Dorsolateral prefrontal cortex (tissue), 120 donors: ENCODE measurements at regions of chr9 and their contacts with region 1.

Region 1: DNA sequence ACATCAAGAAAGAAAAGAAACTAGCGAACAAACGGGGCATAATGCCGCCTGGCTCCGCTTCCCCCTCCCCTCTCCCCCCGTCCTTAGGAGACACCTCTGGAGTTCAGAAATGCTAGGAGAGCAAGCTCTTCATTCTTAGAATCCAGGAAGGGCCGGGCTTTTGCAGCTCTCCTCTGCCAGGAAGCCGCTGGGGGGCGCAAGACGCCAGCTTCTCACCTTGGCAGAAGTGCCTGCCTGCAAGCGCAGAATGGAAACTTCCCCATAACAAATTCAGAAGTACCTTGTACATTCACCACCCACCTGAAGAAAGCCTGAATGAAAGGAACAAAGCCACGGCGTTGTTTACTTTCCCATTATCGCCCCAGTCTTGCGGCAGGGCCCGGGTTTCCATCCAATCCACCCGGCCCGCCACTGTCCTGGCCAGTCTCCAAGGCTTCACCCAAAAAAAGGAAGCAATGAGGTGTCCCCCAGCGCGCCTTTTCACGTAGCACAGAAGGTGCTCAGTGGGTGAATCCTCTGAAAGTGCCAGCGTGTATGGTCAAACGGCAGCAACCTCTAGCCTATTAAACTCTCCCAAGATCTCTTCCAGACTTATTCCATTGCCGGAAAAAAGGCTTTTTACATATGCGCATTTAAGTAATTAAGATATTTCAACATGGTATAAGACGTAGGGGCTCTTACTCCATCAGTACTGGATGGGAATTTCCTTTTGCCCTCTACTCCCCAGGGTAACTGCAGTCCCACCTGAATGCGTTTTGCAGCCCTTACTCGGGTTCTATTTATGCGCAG is 1.6 kb upstream of the GADD45G start:
- DNase-seq: peak; percentile 88 to 94 (median 92)
- H3K4me3 ChIP-seq: peak overlapping the region; percentile 35 to 89 (median 78)
- H3K27ac ChIP-seq: peak overlapping the region in 40 of 59 donors; percentile 5 to 96 (median 86)
- H3K27me3 ChIP-seq: no peaks in the 10 kb centered on the region
- CTCF ChIP-seq: peak; percentile 67 to 94 (median 86)

Region 2: GRCh38 chr9:89489548-89490530 is 113.3 kb before region 1 on chr9:
- intact Hi-C with region 1: no loop called
- DNase-seq: peak in 1 of 10 donors; percentile 12
- H3K4me3 ChIP-seq: peak overlapping the region in 16 of 59 donors; percentile 1 to 39 (median 14)
- H3K27ac ChIP-seq: peak overlapping the region in 57 of 59 donors; percentile 32 to 96 (median 84)
- H3K27me3 ChIP-seq: no peaks in the 10 kb centered on the region
- CTCF ChIP-seq: no peak

Region 3: GRCh38 chr9:89661956-89662717 is 59.0 kb after region 1 on chr9:
- intact Hi-C with region 1: loop called (anchors 2 to 5 kb)
- DNase-seq: peak; percentile 97 to 100 (median 98)
- H3K4me3 ChIP-seq: peak overlapping the region; percentile 8 to 73 (median 53)
- H3K27ac ChIP-seq: peak overlapping the region in 58 of 59 donors; percentile 23 to 91 (median 78)
- H3K27me3 ChIP-seq: no peaks in the 10 kb centered on the region
- CTCF ChIP-seq: peak in 6 of 56 donors; percentile 12 to 24 (median 19)

Region 4: GRCh38 chr9:89802781-89803355 is 199.7 kb after region 1 on chr9:
- intact Hi-C with region 1: loop called (anchors 2 to 5 kb)
- DNase-seq: peak in 3 of 10 donors; percentile 48 to 63 (median 54)
- H3K4me3 ChIP-seq: peak overlapping the region in 35 of 59 donors; percentile 1 to 57 (median 25)
- H3K27ac ChIP-seq: peak overlapping the region in 48 of 59 donors; percentile 7 to 79 (median 54)
- H3K27me3 ChIP-seq: no peaks in the 10 kb centered on the region
- CTCF ChIP-seq: no peak

Region 5: GRCh38 chr9:89919169-89919681 is 316.1 kb after region 1 on chr9:
- intact Hi-C with region 1: loop called (anchors 5 kb)
- DNase-seq: no peak
- H3K4me3 ChIP-seq: no peak overlapping the region
- H3K27ac ChIP-seq: no peak overlapping the region
- H3K27me3 ChIP-seq: peaks cover 0 to 4% (median 0%) of the 10 kb centered on the region in 45 donors
- CTCF ChIP-seq: peak in 21 of 56 donors; percentile 5 to 38 (median 24)

Region 6: DNA sequence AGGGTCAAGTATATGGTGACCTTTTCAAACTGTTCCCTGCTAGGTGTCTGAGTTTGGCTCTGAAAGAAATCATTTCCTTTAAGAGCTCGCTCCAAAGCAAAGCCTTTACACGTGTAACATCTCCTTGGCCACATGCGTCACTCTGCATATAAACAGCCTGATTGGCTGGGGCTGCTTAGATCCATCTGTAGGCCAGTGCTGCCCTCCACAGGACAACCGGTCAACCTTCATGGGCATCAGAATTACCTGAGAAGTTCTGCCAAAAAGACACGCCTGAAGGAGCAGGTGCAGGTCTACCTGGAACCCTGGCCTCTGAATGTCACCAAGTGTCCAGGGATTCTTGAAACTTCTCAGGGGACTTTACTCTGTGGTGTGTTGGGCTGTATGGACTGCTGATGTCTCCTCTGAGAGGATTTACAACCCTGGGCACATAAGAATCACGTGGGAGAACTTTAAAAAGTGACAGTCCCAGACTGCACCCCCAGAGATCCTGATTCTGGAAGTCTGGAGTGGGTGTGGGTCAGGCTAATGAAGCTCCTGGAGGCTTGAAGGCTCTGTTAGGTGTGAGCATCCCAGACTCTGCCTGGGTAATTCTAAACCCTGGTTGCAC is 499.2 kb after region 1 on chr9:
- intact Hi-C with region 1: loop called (anchors 1 to 2 kb)
- DNase-seq: peak; percentile 47 to 89 (median 82)
- H3K4me3 ChIP-seq: no peak overlapping the region
- H3K27ac ChIP-seq: no peak overlapping the region
- H3K27me3 ChIP-seq: no peaks in the 10 kb centered on the region
- CTCF ChIP-seq: peak; percentile 48 to 91 (median 82)